T-cell (primary cell): ENCODE measurements at regions of chr1 and their contacts with region 1.

Region 1: DNA sequence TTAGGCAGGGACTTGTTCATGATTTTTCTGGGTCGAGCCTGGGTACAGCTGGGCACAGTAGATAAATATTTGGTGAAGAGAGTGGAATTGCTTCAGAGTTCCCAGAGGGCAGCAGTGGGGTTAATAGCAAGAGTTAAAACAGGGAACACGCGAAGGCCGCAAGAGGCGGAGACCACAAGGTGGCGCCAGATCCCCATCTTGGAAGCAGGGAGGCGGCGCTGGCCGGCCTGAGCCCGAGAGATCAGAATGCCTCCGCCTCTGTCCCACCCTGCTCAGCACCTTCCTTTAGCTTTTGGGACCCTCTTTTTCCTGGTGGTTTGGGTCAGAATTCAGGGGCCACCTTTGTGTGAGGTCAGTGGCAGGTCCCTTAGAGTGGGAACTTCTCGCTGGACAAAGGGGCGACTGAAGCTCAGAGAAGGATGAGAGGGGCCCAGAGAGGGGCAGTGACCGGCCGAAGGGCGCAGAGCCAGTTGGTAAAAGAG is 6.5 kb upstream of the PADI2 start:
- DNase-seq: peak; percentile 39 to 87 (median 75)
- ATAC-seq: peak; percentile 67 to 85 (median 71)
- H3K4me3 ChIP-seq: no peak overlapping the region
- H3K4me3 Mint-ChIP-seq: no peak overlapping the region
- H3K27ac ChIP-seq: no peak overlapping the region
- H3K27ac Mint-ChIP-seq: no peak overlapping the region
- H3K4me1 ChIP-seq: peaks cover 0 to 6% of the 10 kb centered on the region in 2 experiments
- H3K4me1 Mint-ChIP-seq: peaks cover 0 to 5% (median 4%) of the 10 kb centered on the region in 3 donors
- H3K27me3 ChIP-seq: peaks cover 0 to 19% of the 10 kb centered on the region in 2 experiments
- H3K27me3 Mint-ChIP-seq: peaks cover 5 to 6% of the 10 kb centered on the region in 2 donors

Region 2: DNA sequence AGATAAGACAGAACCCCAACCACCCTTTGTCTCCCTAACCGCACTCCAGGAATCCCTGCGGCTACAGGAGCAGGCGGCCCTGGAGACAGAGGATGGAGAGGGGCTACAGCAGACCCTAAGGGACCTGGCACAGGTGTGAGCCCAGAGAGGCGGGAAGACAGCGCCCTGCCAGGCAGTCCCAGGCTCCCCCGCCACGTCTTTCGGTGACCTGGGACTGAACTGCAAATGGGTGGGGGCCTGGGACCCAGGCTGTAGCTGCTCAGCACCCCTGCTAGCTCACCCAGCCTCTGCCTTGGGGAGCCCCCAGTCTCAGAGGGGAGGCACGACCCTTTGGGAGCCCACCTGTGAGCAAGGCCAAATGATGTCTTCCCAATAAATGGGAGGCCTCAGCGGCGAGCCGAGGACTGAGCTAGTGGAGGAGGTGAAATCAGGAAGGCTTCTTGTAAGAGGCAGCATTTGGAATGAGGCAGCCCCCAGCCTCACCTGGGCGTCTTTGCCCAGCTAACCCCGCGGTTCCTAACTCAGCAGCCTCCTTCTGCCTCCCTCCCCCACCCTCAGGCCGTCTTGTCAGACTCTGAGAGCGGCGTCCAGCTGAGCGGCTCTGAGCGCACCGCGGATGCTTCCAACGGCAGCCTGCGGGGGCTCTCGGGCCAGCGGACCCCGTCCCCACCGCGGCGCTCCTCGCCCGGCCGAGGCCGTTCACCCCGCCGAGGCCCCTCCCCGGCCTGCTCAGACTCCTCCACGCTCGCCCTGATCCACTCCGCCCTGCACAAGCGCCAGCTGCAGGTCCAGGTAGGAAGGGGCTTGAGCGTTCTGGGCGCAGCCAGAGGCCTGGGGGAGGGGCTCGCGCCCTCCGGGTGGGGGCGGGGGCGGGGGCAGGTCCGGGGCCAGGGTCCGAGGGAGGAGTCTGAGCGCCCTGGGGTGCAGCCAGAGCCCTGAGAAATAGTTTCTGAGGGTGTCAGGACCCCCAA is 187.2 kb before region 1 on chr1:
- CTCF ChIA-PET with region 1: no interaction called
- POLR2A ChIA-PET with region 1: no interaction called
- DNase-seq: no peak
- ATAC-seq: no peak
- H3K4me3 ChIP-seq: no peak overlapping the region
- H3K4me3 Mint-ChIP-seq: no peak overlapping the region
- H3K27ac ChIP-seq: no peak overlapping the region
- H3K27ac Mint-ChIP-seq: no peak overlapping the region
- H3K4me1 ChIP-seq: no peaks in the 10 kb centered on the region
- H3K4me1 Mint-ChIP-seq: no peaks in the 10 kb centered on the region
- H3K27me3 ChIP-seq: no peaks in the 10 kb centered on the region
- H3K27me3 Mint-ChIP-seq: no peaks in the 10 kb centered on the region

Region 3: DNA sequence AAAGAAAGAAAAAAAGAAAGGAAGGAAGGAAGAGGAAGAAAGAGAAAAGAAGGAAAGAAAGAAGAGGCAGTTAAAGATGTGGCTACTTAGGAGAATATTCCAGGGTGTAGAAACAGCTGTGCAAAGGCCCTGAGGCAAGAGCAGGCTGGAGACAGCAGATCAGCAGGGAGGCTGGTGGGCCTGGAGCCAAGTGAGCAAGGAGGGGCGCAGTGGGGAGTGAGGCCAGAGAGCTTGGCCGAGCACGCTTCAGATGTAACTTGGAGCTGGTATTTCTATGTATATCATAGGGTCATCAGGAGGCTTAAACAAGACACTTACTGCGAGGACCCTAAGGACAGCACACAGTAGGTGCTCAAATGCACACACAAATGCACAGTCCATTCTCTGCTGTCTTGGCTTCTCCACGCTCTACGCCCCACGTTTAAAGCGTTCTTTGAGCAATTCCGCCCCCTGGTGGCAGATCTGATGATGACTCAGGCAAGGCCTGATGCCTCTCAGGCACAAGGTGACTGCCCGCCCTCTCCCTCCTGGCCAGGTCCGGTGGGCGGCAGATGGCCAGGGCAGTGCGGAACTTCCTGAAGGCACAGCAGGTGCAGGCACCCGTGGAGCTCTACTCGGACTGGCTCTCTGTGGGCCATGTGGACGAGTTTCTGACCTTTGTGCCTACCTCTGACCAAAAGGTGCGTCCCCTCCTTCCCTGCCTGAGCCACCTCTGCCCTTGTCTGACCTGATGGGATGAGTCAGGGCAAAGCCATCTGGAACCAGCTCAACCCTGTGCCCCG is 111.2 kb after region 1 on chr1:
- CTCF ChIA-PET with region 1: interaction called, 7 to 13 read pairs
- POLR2A ChIA-PET with region 1: no interaction called
- DNase-seq: peak; percentile 56 to 89 (median 81)
- ATAC-seq: peak; percentile 71 to 83 (median 80)
- H3K4me3 ChIP-seq: no peak overlapping the region
- H3K4me3 Mint-ChIP-seq: no peak overlapping the region
- H3K27ac ChIP-seq: no peak overlapping the region
- H3K27ac Mint-ChIP-seq: no peak overlapping the region
- H3K4me1 ChIP-seq: no peaks in the 10 kb centered on the region
- H3K4me1 Mint-ChIP-seq: peaks cover 0 to 9% (median 3%) of the 10 kb centered on the region in 3 donors
- H3K27me3 ChIP-seq: peaks cover 0 to 29% of the 10 kb centered on the region in 2 experiments
- H3K27me3 Mint-ChIP-seq: peaks cover 0 to 3% of the 10 kb centered on the region in 2 donors